Spleen (tissue), 13 donors: ENCODE measurements at regions of chr11 and their contacts with region 1.

Region 1: DNA sequence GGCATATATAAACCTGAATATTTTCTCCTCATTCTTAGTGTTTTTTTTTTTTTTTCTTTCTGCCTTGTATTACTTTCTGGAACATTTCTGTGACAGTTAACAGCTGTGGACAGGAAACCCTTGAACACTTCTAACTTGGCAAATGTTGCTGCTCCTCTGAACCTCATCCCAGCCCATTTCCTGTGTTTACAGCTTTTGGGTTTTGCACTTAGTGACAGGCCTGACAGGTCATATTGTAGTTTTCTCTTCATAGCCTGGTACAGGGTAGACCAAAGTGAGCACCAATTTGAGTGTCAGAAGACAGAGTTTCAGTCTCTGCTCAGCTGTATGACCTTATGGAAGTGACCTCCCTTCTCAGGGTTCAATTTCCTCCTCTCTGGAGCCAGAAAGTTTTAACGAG is 91.6 kb downstream of the STIM1 start:
- DNase-seq: no peak
- H3K4me3 ChIP-seq: peak overlapping the region in 4 of 8 donors; percentile 7 to 56 (median 13)
- H3K27ac ChIP-seq: peak overlapping the region; percentile 71 to 94 (median 88)
- H3K4me1 ChIP-seq: peaks cover 76 to 100% (median 96%) of the 10 kb centered on the region in 6 donors
- H3K27me3 ChIP-seq: no peaks in the 10 kb centered on the region
- CTCF ChIP-seq: no peak
- POLR2A ChIP-seq: peak in 2 of 3 donors; percentile 26 to 42

Region 2: GRCh38 chr11:3854977-3855807 is 91.9 kb before region 1 on chr11 and contains the start of gene STIM1:
- intact Hi-C with region 1: loop called (anchors 5 kb)
- DNase-seq: peak; percentile 99
- H3K4me3 ChIP-seq: peak within 1 kb of the TSS; percentile 85 to 94 (median 92)
- H3K27ac ChIP-seq: peak within 1 kb of the TSS; percentile 85 to 100 (median 98)
- H3K4me1 ChIP-seq: peaks cover 33 to 69% (median 62%) of the 10 kb centered on the region in 6 donors
- H3K27me3 ChIP-seq: no peaks in the 10 kb centered on the region
- CTCF ChIP-seq: peak; percentile 98 to 100 (median 99)
- POLR2A ChIP-seq: peak in 1 of 3 donors; percentile 32
- total RNA-seq, gene STIM1: 55.4 to 85.2 (median 65.0) TPM

Region 3: DNA sequence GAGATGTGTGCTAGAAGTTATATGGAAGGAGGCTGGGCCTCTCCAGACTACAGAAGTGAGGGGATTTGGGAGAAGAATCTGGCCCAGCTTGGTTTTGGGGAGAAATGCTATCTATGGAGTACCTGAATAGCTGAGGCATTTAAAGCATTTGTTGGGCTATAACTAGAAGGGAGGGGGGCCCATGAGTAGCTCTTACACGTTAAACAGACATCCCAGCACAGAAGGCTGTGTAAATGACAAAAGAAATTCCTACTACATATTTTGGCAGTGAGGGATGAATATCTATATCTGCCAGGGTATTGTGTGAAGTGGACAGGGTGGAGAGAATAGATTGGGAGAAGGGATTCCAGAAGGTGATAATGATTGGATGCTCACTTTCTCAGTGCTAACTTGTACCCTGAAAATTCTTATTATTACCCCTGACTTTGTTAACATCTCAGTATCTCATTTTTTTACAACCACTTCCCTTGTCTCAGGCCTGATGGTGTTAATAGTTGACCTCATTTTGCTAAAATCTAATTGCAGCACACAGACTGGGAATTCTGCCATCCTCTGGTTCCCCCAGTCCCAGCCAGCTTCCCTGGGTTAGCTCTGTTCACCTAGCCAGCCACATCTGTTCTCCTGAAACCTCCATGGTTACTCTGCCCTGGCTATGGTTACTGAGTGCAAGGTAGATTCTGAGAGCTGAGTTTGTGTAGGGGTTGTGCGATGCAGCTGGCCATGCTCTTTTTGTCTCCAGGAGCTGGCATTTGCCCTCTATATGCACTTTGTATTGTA is 118.7 kb after region 1 on chr11:
- intact Hi-C with region 1: loop called (anchors 10 kb)
- DNase-seq: no peak
- H3K4me3 ChIP-seq: no peak overlapping the region
- H3K27ac ChIP-seq: peak overlapping the region in 1 of 8 donors; percentile 13
- H3K4me1 ChIP-seq: peaks cover 4 to 74% (median 48%) of the 10 kb centered on the region in 6 donors
- H3K27me3 ChIP-seq: no peaks in the 10 kb centered on the region
- CTCF ChIP-seq: no peak
- POLR2A ChIP-seq: no peak

Region 4: GRCh38 chr11:4187055-4187988 is 240.3 kb after region 1 on chr11:
- intact Hi-C with region 1: no loop called
- DNase-seq: peak; percentile 96
- H3K4me3 ChIP-seq: peak overlapping the region; percentile 30 to 82 (median 52)
- H3K27ac ChIP-seq: peak overlapping the region in 2 of 8 donors; percentile 47 to 53
- H3K4me1 ChIP-seq: peaks cover 2 to 15% (median 14%) of the 10 kb centered on the region in 6 donors
- H3K27me3 ChIP-seq: peaks cover 0 to 19% (median 0%) of the 10 kb centered on the region in 7 donors
- CTCF ChIP-seq: peak; percentile 88 to 99 (median 98)
- POLR2A ChIP-seq: no peak

Region 5: GRCh38 chr11:5151713-5152153 is 1204.7 kb after region 1 on chr11:
- intact Hi-C with region 1: no loop called
- DNase-seq: no peak
- H3K4me3 ChIP-seq: no peak overlapping the region
- H3K27ac ChIP-seq: no peak overlapping the region
- H3K4me1 ChIP-seq: no peaks in the 10 kb centered on the region
- H3K27me3 ChIP-seq: no peaks in the 10 kb centered on the region
- CTCF ChIP-seq: no peak
- POLR2A ChIP-seq: no peak